ENCODE measurements at regions of chr5 and their contacts with region 1.

Region 1: GRCh38 chr5:76337953-76338451 is 65.1 kb upstream of the IQGAP2 start:
- DNase-seq: peak; percentile 72 to 76
- H3K4me3 ChIP-seq: no peak overlapping the region
- H3K27ac ChIP-seq: no peak overlapping the region
- H3K4me1 ChIP-seq: 0 out of 2 replicates have a peak, but pooled peaks cover 4% of the 10 kb centered on the region
- H3K27me3 ChIP-seq: no peaks in the 10 kb centered on the region
- CTCF ChIP-seq: peak; percentile 78

Region 2: DNA sequence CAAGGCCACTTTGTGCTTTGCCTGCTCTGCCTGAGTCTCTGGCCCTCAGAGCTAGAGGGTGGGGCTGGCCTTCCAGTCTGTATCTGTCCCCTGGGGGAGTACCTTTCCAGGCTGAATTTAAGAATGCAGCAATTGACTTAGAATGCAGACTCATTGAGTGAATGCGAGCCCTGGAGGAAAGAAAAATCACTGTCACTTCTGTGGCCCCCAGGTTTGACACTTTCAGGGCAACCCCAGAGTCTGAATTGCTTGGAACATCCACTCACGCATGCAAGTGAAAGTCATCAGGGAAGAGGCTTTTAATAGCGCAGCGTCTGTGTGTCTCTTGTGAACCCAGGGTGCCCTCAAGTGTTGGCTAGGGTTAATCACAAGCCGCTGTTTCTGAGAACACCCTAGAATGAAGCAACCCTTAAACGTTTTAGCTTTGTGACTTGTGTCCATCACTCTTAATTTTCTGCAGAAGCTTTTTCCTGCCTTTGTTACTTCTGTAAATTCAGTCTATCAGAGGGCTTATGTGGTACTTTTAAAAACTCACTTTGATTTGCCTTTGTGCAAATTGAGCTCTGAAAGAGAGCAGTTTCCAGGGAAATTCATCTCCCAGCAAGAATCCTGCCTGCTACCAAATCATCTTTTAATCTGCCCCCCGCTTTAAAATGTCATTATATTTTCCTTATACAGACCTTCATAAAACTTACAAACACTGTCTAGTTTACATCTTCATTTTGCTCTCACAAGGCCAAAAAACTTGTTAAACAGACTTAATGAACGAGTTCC is 81.7 kb before region 1 on chr5:
- CTCF ChIA-PET with region 1: no interaction called
- POLR2A ChIA-PET with region 1: no interaction called
- intact Hi-C with region 1: no loop called
- DNase-seq: peak; percentile 33 to 58
- H3K4me3 ChIP-seq: no peak overlapping the region
- H3K27ac ChIP-seq: no peak overlapping the region
- H3K4me1 ChIP-seq: no peaks in the 10 kb centered on the region
- H3K27me3 ChIP-seq: no peaks in the 10 kb centered on the region
- CTCF ChIP-seq: peak; percentile 68

Region 3: GRCh38 chr5:76413746-76414145 is 75.7 kb after region 1 on chr5:
- CTCF ChIA-PET with region 1: no interaction called
- POLR2A ChIA-PET with region 1: no interaction called
- intact Hi-C with region 1: no loop called
- DNase-seq: no peak
- H3K4me3 ChIP-seq: no peak overlapping the region
- H3K27ac ChIP-seq: no peak overlapping the region
- H3K4me1 ChIP-seq: no peaks in the 10 kb centered on the region
- H3K27me3 ChIP-seq: no peaks in the 10 kb centered on the region
- CTCF ChIP-seq: no peak

Region 4: GRCh38 chr5:76489877-76490688 is 152.1 kb after region 1 on chr5:
- CTCF ChIA-PET with region 1: no interaction called
- POLR2A ChIA-PET with region 1: no interaction called
- intact Hi-C with region 1: no loop called
- DNase-seq: no peak
- H3K4me3 ChIP-seq: no peak overlapping the region
- H3K27ac ChIP-seq: no peak overlapping the region
- H3K4me1 ChIP-seq: no peaks in the 10 kb centered on the region
- H3K27me3 ChIP-seq: no peaks in the 10 kb centered on the region
- CTCF ChIP-seq: no peak

Region 5: DNA sequence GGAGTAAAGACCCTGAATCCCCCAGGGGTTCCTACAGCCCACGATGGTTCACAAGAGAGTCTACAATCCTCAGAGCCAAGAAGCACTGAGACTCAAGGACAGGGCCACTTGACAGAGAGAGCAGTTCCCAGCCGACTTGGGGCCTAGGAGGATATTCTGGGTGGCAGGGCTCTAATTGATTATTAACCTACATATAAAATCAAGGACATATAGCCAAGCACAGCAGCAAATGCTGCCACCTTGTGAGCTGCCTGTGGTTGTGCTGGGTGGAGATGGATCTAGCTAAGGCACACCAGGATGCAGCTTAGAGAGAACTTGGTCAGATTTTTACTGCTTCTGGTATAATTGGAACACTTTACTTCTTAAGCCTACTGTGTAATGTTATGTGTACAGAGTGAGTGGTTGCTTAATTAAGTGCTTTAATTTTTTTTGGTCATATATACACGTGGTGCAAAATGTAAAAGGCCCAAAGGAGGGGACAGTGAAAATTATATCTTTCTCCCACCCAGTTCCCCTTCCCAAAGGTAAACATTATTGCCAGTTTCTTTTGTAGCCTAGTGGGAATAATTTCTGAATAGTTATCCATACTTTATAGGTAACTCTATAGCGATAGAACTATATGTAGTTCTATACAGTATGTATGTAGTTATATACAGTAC is 206.4 kb after region 1 on chr5:
- CTCF ChIA-PET with region 1: no interaction called
- POLR2A ChIA-PET with region 1: no interaction called
- intact Hi-C with region 1: loop called (anchors 1 kb)
- DNase-seq: no peak
- H3K4me3 ChIP-seq: no peak overlapping the region
- H3K27ac ChIP-seq: no peak overlapping the region
- H3K4me1 ChIP-seq: no peaks in the 10 kb centered on the region
- H3K27me3 ChIP-seq: peaks cover 8% of the 10 kb centered on the region
- CTCF ChIP-seq: peak; percentile 64

Region 6: DNA sequence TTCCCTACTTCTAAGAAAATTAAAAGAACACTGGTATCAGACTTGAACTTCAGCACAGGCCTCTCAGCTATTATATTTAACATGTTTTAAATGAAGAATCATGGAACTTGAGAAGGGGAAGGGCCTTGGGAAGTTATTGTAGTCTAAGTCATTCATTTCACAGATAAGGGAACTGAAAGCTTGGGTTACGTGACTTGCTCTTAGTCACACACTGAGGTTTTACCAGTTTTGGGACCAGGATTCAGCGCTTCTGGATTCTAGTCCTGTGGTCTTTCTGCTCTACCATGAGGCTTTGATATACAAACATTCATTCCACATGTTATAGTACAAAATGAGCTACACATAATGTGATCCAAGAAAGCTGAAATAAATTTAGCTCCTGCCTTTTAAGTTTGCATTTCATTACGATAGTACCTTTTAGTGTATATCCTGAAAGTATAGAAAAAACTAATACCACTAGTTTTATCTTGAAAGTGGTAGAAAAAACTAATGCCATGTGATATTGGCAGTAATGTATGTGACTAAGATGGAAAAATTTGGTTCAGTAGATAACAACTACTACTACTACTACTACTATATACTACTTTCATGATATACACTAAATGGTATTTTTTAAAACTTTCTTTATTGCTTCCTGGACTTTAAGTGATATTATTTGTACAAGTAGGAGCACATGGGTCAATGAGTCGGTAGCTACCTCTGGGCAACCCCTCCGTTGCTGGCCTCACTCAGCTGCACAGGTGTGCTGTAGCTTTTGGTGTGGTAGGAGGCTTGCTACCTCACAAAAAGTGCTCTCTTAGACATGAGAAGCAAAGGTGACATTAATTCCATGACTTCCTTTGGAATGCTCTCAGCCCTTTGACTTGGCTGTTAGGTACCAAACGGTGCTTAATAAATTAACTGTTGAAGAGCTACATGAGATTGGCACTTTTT is 244.5 kb after region 1 on chr5:
- CTCF ChIA-PET with region 1: interaction called, 3 read pairs
- POLR2A ChIA-PET with region 1: no interaction called
- intact Hi-C with region 1: loop called (anchors 5 kb)
- DNase-seq: no peak
- H3K4me3 ChIP-seq: no peak overlapping the region
- H3K27ac ChIP-seq: no peak overlapping the region
- H3K4me1 ChIP-seq: no peaks in the 10 kb centered on the region
- H3K27me3 ChIP-seq: no peaks in the 10 kb centered on the region
- CTCF ChIP-seq: no peak

Measured in PC-9 (cell line).